WTC11 (cell line): ENCODE measurements at regions of chr6 and their contacts with region 1.

Region 1: GRCh38 chr6:116279260-116280063 is at the start of gene TSPYL1:
- DNase-seq: peak; percentile 95
- ATAC-seq: peak; percentile 97
- H3K4me3 Mint-ChIP-seq: peak within 1 kb of the TSS; percentile 96
- H3K27ac Mint-ChIP-seq: peak within 1 kb of the TSS; percentile 100
- H3K4me1 Mint-ChIP-seq: peaks cover 55% of the 10 kb centered on the region
- H3K27me3 Mint-ChIP-seq: no peaks in the 10 kb centered on the region
- CTCF ChIP-seq: no peak
- total RNA-seq, gene TSPYL1: 62.4 to 68.6 TPM (median 64.3 TPM) in 3 replicates

Region 2: DNA sequence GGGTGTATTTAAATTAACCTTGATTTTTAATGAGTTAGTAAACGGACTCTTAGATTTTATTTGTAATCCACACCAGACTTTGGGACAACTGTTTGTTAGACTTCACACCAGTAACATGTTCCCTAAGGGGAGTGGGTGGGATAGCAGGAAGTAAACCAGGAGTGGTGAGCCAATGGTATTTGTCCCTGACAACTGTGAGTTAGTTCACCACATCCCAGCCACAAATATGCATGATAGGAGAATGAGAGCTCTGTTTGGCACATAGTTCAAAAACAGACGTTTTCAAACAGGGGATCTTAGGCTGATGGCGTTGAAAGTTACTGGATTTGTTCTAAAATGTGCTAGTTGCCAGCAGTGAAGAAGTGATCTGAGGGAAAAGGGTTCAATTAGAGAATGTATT is 134.9 kb before region 1 on chr6:
- CTCF ChIA-PET with region 1: no interaction called
- POLR2A ChIA-PET with region 1: no interaction called
- DNase-seq: no peak
- ATAC-seq: no peak
- H3K4me3 Mint-ChIP-seq: no peak overlapping the region
- H3K27ac Mint-ChIP-seq: no peak overlapping the region
- H3K4me1 Mint-ChIP-seq: peaks cover 16% of the 10 kb centered on the region
- H3K27me3 Mint-ChIP-seq: no peaks in the 10 kb centered on the region
- CTCF ChIP-seq: no peak

Region 3: GRCh38 chr6:116238083-116238482 is 41.4 kb before region 1 on chr6:
- CTCF ChIA-PET with region 1: no interaction called
- POLR2A ChIA-PET with region 1: no interaction called
- DNase-seq: no peak
- ATAC-seq: no peak
- H3K4me3 Mint-ChIP-seq: no peak overlapping the region
- H3K27ac Mint-ChIP-seq: no peak overlapping the region
- H3K4me1 Mint-ChIP-seq: no peaks in the 10 kb centered on the region
- H3K27me3 Mint-ChIP-seq: no peaks in the 10 kb centered on the region
- CTCF ChIP-seq: no peak

Region 4: GRCh38 chr6:116371120-116371917 is 91.9 kb after region 1 on chr6:
- CTCF ChIA-PET with region 1: interaction called, 9 read pairs
- POLR2A ChIA-PET with region 1: interaction called, 15 read pairs
- DNase-seq: peak; percentile 84
- ATAC-seq: peak; percentile 66
- H3K4me3 Mint-ChIP-seq: peak overlapping the region; percentile 84
- H3K27ac Mint-ChIP-seq: peak overlapping the region; percentile 90
- H3K4me1 Mint-ChIP-seq: peaks cover 58% of the 10 kb centered on the region
- H3K27me3 Mint-ChIP-seq: no peaks in the 10 kb centered on the region
- CTCF ChIP-seq: no peak

Region 5: DNA sequence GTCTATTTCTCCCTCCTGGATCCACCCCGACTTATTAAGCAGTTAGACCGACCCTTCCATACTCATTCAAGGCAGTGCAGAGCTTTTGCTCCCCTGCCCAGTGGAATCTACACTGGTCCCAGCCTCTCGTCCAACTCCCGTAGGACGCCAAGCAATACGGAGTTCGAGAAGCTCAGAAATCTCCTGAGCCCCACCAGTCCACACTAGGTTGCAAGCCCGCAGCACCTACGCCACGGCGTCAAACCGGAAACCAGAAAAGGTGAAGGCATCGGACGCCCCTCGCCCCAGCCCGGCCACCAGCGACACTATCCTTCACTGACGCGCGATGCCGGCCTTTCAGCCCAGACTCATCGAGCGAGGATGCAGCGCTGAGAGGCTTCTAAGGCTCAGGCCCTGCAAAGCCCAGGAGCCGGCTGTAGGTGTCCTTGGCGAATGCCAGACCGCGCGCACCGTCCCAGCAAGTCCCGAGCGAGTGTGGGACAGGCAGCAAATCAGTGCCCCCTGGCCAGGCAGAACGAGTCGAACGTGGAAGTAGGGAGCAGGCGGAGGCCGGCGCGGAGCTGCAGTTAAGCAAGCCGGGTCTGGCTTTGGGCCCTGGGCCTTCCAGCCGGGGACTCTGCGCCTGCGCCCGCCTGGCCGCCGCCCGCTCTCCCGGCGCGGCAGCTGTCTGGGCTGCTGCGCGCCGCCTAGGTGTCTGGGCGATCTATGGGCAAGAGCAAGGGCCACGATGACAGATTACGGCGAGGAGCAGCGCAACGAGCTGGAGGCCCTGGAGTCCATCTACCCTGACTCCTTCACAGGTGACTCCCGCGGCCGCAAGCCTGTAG is 291.6 kb after region 1 on chr6 and contains the start of gene RWDD1:
- CTCF ChIA-PET with region 1: no interaction called
- POLR2A ChIA-PET with region 1: interaction called, 11 read pairs
- DNase-seq: peak; percentile 99
- ATAC-seq: peak; percentile 98
- H3K4me3 Mint-ChIP-seq: peak within 1 kb of the TSS; percentile 98
- H3K27ac Mint-ChIP-seq: peak within 1 kb of the TSS; percentile 100
- H3K4me1 Mint-ChIP-seq: peaks cover 14% of the 10 kb centered on the region
- H3K27me3 Mint-ChIP-seq: no peaks in the 10 kb centered on the region; the same call in 1 of the 2 replicates
- CTCF ChIP-seq: no peak
- total RNA-seq, gene RWDD1: 26.2 to 33.8 TPM (median 28.3 TPM) in 3 replicates